ENCODE measurements at regions of chr19 and their contacts with region 1.

Region 1: DNA sequence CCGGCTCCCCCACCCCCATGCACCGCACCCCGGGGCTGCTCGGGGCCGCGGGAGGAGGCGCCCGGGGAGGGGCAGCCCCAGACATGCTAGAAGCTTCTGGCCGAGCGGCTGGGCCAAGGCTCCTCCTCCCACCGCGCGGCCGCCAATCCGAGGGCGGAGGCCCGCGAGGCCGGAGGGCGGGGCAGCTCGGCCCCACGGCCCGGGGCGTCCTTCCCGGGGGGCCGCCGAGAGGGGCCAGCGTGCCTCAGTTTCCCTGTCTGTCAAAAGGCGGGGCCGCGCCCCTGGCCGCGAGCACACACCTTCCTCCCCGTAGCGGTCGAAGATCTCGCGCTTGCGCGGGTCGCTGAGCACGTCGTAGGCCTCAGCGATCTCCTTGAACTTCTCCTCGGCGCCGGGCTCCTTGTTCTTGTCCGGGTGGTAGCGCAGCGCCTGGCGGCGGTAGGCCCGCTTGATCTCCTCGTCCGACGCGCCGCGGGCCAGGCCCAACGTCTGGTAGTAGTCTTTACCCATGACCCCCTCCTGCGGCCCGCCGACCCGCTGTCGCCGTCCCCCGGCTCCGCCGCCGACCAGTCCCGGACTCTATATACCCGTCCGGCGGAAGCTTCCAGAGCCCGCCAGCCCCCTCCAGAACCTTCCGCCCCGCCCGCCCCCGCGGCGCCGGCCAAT is at the start of gene DNAJB1:
- DNase-seq: peak; percentile 93
- H3K4me3 ChIP-seq: peak within 1 kb of the TSS; percentile 81 to 94 (median 81)
- H3K27ac ChIP-seq: peak within 1 kb of the TSS; percentile 95
- H3K4me1 ChIP-seq: peaks cover 39% of the 10 kb centered on the region
- H3K27me3 ChIP-seq: no peaks in the 10 kb centered on the region
- CTCF ChIP-seq: no peak
- total RNA-seq, gene DNAJB1: 133 to 182 TPM

Region 2: GRCh38 chr19:14419106-14419813 is 98.7 kb before region 1 on chr19 and contains the start of gene DDX39A:
- CTCF ChIA-PET with region 1: no interaction called
- dilution Hi-C with region 1: no loop called
- in situ Hi-C with region 1: no loop called
- intact Hi-C with region 1: loop called (anchors 2 kb)
- DNase-seq: peak; percentile 99
- H3K4me3 ChIP-seq: peak within 1 kb of the TSS; percentile 80 to 98 (median 94)
- H3K27ac ChIP-seq: peak within 1 kb of the TSS; percentile 80
- H3K4me1 ChIP-seq: peaks cover 17% of the 10 kb centered on the region
- H3K27me3 ChIP-seq: no peaks in the 10 kb centered on the region
- CTCF ChIP-seq: no peak
- total RNA-seq, gene DDX39A: 34.0 to 74.4 TPM

Region 3: GRCh38 chr19:14479975-14480699 is 37.8 kb before region 1 on chr19:
- CTCF ChIA-PET with region 1: no interaction called
- dilution Hi-C with region 1: no loop called
- in situ Hi-C with region 1: no loop called
- intact Hi-C with region 1: loop called (anchors 5 kb)
- DNase-seq: no peak
- H3K4me3 ChIP-seq: no peak overlapping the region
- H3K27ac ChIP-seq: no peak overlapping the region
- H3K4me1 ChIP-seq: peaks cover 23% of the 10 kb centered on the region
- H3K27me3 ChIP-seq: no peaks in the 10 kb centered on the region
- CTCF ChIP-seq: peak; percentile 63 to 74

Region 4: DNA sequence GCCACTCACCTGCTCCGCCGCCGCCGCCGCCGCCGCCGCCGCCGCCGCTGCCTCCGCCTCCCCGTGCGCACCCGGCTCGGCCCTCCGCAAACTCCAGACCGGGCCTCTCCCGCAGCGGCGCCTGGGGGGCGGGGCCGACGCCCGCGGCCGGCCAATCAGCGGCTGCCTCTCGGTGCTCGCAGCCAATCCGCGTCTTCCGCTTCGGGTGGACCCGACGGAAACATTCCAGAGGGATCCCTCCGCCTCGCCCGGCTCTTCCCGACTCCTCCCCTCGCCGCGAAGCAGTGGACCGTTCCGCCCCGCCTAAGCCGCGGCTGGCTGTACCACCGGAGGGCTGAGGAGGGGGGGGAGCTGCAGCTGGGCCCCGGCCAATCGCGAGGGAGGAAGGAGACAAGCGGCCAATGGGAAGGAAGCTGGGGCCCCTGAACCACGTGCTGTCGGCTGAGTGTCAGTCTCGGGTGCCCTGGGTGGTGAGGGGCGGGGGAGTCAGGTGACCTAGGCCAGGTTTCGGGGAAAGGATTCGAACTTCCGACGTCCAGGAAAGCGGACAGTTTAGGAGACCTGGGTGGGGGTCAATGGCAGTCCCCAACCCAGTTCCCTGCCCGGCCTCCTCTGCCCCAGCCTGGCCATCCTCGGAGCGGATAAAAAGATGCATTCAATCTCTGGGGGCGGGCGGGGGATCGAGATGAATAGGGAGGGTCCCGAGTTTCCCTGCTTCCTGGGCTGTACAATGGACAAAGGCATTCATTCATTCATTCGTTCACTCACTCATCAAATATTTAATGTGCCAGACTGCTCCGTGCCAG is 21.7 kb before region 1 on chr19 and contains the start of gene GIPC1:
- CTCF ChIA-PET with region 1: interaction called, 10 read pairs
- dilution Hi-C with region 1: no loop called
- in situ Hi-C with region 1: no loop called
- intact Hi-C with region 1: loop called (anchors 1 kb)
- DNase-seq: peak; percentile 99
- H3K4me3 ChIP-seq: peak within 1 kb of the TSS; percentile 89 to 99 (median 96)
- H3K27ac ChIP-seq: peak within 1 kb of the TSS; percentile 66
- H3K4me1 ChIP-seq: peaks cover 23% of the 10 kb centered on the region
- H3K27me3 ChIP-seq: no peaks in the 10 kb centered on the region
- CTCF ChIP-seq: no peak
- total RNA-seq, gene GIPC1: 186 to 190 TPM

Region 5: DNA sequence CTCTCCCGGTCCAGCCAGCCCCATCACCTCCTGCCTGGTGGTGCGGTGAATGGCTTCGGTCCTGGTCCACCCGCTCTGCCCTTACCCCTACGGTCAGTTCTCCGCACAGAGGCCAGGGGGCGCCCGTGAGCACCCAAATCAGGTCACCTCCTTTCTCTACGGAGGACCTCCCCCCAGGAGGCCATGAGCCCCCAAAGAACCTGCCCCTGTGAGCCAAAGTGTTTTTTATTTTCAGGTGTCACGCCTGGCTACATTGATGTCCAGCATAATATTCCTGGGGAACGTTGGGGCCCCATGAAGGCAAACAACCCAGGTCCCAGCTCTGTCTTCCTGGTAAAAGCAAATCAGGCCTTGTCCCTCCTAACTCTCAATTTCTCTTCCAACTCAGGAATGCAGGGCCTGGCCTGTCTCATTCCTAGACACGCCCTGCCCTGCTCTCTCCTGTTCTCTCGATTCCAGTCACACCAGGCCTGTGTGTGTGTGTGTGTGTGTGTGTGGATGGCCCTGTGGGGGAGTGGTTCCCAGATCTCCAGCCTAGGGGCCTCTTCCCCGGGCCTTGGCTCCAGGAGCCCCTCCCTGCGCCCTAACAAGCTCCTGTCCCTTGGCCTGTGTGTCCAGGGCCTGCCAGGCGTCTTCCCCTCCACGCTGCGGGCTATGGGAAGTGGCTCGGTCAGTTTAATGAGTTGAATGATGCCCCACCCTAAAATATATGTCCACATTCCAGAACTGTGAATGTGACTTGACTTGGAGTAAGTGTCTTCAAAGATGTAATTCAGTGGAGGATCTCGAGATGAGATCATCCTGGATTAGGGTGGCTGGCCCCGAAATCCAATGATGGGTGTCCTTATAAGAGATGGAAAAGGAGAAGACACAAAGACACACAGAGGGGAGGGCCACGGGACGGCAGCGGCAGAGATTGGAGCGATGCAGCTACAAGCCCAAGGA is 12.2 kb before region 1 on chr19:
- CTCF ChIA-PET with region 1: interaction called, 5 read pairs
- dilution Hi-C with region 1: no loop called
- in situ Hi-C with region 1: no loop called
- intact Hi-C with region 1: loop called (anchors 1 kb)
- DNase-seq: peak; percentile 93
- H3K4me3 ChIP-seq: peak overlapping the region in 1 of 3 experiments; percentile 16
- H3K27ac ChIP-seq: peak overlapping the region; percentile 96
- H3K4me1 ChIP-seq: peaks cover 42% of the 10 kb centered on the region
- H3K27me3 ChIP-seq: no peaks in the 10 kb centered on the region
- CTCF ChIP-seq: peak; percentile 83 to 93

Region 6: DNA sequence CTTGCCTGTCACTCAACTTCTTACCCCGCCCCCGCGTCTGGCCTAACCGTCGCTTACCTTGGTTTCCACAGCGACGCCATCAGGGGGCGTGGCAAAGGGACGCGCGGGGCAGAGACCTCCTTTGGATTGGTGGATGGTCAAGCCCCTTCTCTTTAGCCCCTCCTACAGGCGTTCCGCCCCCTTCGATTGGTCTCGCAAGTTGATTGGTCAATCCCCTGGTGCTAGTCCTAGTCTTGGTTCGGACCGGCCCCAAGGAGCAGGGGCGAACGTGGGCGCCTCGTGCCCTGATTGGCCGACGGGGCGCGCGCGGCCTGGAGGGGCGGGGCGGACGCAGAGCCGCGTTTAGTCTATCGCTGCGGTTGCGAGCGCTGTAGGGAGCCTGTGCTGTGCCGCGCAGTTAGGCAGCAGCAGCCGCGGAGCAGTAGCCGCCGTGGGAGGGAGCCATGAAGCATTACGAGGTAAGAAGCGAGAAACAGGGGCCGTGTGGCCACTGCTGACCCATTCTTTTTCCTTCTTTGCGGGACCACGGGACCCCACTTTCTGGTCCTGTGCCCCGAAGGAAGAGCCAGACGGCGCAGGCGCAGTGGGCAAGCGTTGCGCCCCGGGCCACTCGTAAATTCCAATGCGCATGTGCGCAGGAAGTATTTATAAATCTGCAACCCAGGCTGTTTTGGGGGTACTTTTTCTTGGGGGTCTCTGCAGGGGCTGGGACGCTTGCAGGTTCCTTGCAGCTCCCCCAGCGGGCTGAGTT is 11.5 kb after region 1 on chr19 and contains the start of gene TECR:
- CTCF ChIA-PET with region 1: interaction called, 5 read pairs
- dilution Hi-C with region 1: no loop called
- in situ Hi-C with region 1: no loop called
- intact Hi-C with region 1: loop called (anchors 1 kb)
- DNase-seq: peak; percentile 100
- H3K4me3 ChIP-seq: peak within 1 kb of the TSS; percentile 78 to 94 (median 89)
- H3K27ac ChIP-seq: peak within 1 kb of the TSS; percentile 97
- H3K4me1 ChIP-seq: peaks cover 44% of the 10 kb centered on the region
- H3K27me3 ChIP-seq: no peaks in the 10 kb centered on the region
- CTCF ChIP-seq: peak in 1 of 2 donors; percentile 4
- total RNA-seq, gene TECR: 68.0 to 168 TPM

Region 7: DNA sequence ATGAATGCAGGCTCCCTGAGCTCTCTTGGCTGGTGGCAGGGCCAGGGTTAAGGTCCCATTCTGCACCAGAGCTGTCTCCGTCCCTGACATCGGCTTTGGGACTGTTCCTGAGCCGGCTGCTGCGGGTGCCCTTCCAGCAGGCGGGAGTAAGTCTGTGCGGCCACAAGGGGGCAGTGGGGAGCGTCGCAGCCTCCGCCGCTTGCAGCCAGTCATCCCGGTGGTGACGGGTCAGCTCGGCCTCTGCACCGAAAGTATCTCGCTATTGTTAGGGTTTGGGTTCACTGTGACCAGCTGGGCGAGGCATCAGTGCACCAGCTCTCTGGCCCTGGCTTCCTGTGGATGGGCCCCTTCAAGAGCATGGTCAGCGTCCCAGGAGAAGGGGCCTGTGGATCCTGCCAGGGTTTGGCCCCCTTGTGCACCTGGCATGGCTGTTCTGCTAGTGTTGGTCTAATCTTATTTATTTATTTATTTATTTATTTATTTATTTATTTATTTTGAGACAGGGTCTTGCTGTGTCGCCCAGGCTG is 38.8 kb after region 1 on chr19:
- CTCF ChIA-PET with region 1: interaction called, 3 read pairs
- dilution Hi-C with region 1: no loop called
- in situ Hi-C with region 1: no loop called
- intact Hi-C with region 1: loop called (anchors 1 kb)
- DNase-seq: peak; percentile 76
- H3K4me3 ChIP-seq: no peak overlapping the region
- H3K27ac ChIP-seq: peak overlapping the region; percentile 57
- H3K4me1 ChIP-seq: peaks cover 63% of the 10 kb centered on the region
- H3K27me3 ChIP-seq: no peaks in the 10 kb centered on the region
- CTCF ChIP-seq: peak; percentile 94 to 98

Measured in mammary epithelial cell (primary cell).